ENCODE measurements at regions of chr6 and their contacts with region 1.

Region 1: GRCh38 chr6:21053612-21054011 is 519.4 kb downstream of the CDKAL1 start:
- DNase-seq: no peak
- ATAC-seq: no peak
- H3K4me3 Mint-ChIP-seq: no peak overlapping the region
- H3K27ac Mint-ChIP-seq: no peak overlapping the region
- H3K4me1 Mint-ChIP-seq: peaks cover 3% of the 10 kb centered on the region
- H3K27me3 Mint-ChIP-seq: no peaks in the 10 kb centered on the region
- CTCF ChIP-seq: no peak

Region 2: GRCh38 chr6:21478863-21479539 is 425.4 kb after region 1 on chr6:
- CTCF ChIA-PET with region 1: no interaction called
- POLR2A ChIA-PET with region 1: no interaction called
- intact Hi-C with region 1: loop called (anchors 5 kb)
- DNase-seq: no peak
- ATAC-seq: no peak
- H3K4me3 Mint-ChIP-seq: no peak overlapping the region
- H3K27ac Mint-ChIP-seq: no peak overlapping the region
- H3K4me1 Mint-ChIP-seq: no peaks in the 10 kb centered on the region
- H3K27me3 Mint-ChIP-seq: peaks cover 4% of the 10 kb centered on the region
- CTCF ChIP-seq: no peak

Measured in activated B cell treated with CpG ODN at 0.5 μM for 24 hours (primary cell).